ENCODE measurements at regions of chr12 and their contacts with region 1.

Region 1: GRCh38 chr12:92570056-92570753 is 132.6 kb upstream of the PLEKHG7 start:
- DNase-seq: peak in 2 of 4 donors; percentile 83 to 90
- ATAC-seq: peak; percentile 89
- H3K4me3 ChIP-seq: no peak overlapping the region
- H3K27ac ChIP-seq: no peak overlapping the region
- H3K4me1 ChIP-seq: peaks cover 4 to 23% of the 10 kb centered on the region in 2 donors
- H3K27me3 ChIP-seq: no peaks in the 10 kb centered on the region
- CTCF ChIP-seq: peak; percentile 62 to 79

Region 2: GRCh38 chr12:92649511-92650227 is 79.5 kb after region 1 on chr12:
- intact Hi-C with region 1: loop called in 1 of 2 experiments (anchors 10 kb)
- DNase-seq: peak in 3 of 4 donors; percentile 48 to 81 (median 58)
- ATAC-seq: peak; percentile 99
- H3K4me3 ChIP-seq: no peak overlapping the region
- H3K27ac ChIP-seq: no peak overlapping the region
- H3K4me1 ChIP-seq: peaks cover 0 to 7% of the 10 kb centered on the region in 2 donors
- H3K27me3 ChIP-seq: no peaks in the 10 kb centered on the region
- CTCF ChIP-seq: peak; percentile 48 to 58

Region 3: DNA sequence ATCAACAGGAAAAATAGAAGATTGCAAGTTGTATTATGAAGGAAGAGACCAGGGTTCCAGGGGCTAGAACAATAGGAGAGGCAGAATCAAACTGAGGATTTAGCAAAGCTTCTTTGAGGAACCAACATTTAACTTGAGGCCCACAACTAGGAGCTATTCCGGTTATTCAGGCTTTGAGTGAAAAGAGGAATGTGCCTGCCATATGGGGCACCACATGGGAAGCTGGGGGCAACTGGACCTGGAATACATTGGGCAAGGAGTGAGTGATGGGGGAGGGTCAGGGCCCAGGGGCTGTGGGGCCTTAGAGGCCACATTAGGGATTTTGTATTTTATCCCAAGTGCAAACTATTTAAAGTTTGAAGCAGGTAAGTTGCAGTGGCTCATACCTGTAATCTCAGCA is 388.6 kb after region 1 on chr12:
- intact Hi-C with region 1: no loop called
- DNase-seq: no peak
- ATAC-seq: no peak
- H3K4me3 ChIP-seq: no peak overlapping the region
- H3K27ac ChIP-seq: no peak overlapping the region
- H3K4me1 ChIP-seq: no peaks in the 10 kb centered on the region
- H3K27me3 ChIP-seq: no peaks in the 10 kb centered on the region
- CTCF ChIP-seq: no peak